Calu3 (cell line): ENCODE measurements at regions of chr12 and their contacts with region 1.

Region 1: DNA sequence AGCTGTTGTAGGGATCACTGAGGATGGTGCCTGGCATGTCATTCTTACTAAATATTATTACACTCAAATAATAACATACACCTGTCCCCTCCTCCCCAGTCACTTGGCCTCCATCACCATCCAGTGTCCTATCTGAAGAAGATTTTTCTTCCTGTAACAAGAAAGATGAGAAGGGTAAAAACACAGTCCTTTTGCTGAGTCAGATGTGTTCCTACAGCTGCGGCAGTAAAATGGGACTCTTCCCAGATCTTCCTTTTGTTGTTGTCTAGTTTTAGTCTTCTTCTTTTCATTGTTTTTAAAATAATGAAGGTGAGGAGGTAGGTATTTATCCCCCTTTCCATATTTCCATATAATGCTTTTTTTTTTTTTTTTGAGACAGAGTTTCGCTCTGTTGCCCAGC is 83.1 kb upstream of the RFLNA start:
- DNase-seq: no peak
- H3K4me3 Mint-ChIP-seq: no peak overlapping the region
- H3K27ac Mint-ChIP-seq: no peak overlapping the region
- H3K4me1 Mint-ChIP-seq: no peaks in the 10 kb centered on the region
- H3K27me3 Mint-ChIP-seq: peaks cover 79% of the 10 kb centered on the region
- CTCF ChIP-seq: no peak

Region 2: DNA sequence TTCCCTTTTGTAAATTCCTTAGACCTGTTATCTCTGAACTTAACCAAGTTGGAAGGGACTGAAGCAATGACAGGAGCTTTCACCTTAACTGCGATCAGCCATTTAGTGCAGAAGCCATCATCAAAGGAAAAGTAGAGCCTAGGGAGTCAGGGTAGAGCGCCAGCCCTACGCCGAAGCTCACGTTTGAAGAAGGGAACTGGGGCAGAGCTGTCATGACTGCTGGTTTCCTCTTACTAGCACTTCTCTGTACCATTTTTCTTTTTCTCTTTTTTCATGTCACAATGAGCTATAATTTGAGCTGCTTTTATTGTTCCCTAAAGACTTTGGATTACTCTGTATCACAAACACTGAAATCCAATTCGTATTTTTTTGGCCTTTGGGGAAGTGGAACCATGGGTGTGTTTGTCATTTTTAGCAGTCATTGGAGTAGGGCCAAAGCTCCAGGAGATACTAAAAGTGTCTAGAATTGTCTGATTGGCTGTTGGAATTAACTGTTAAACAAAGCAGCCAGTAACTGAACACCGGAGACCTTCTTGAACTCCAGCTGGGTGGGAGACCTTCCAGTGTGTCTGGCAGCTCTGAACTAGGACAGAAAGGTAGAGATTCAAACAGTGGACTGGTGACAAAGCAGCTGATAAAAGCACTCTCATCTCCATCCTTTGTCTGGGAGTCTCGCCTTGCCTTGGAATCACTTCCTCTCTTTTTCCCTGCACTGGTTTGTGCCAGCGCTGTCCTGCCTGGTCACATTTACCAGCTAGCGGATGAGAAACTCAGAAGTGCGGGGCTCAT is 969.4 kb before region 1 on chr12:
- CTCF ChIA-PET with region 1: no interaction called
- intact Hi-C with region 1: no loop called
- DNase-seq: no peak
- H3K4me3 Mint-ChIP-seq: no peak overlapping the region
- H3K27ac Mint-ChIP-seq: no peak overlapping the region
- H3K4me1 Mint-ChIP-seq: no peaks in the 10 kb centered on the region
- H3K27me3 Mint-ChIP-seq: no peaks in the 10 kb centered on the region
- CTCF ChIP-seq: no peak

Region 3: GRCh38 chr12:123877968-123878367 is 333.8 kb before region 1 on chr12:
- CTCF ChIA-PET with region 1: interaction called, 10 read pairs
- intact Hi-C with region 1: no loop called
- DNase-seq: no peak
- H3K4me3 Mint-ChIP-seq: no peak overlapping the region
- H3K27ac Mint-ChIP-seq: no peak overlapping the region
- H3K4me1 Mint-ChIP-seq: no peaks in the 10 kb centered on the region
- H3K27me3 Mint-ChIP-seq: peaks cover 69% of the 10 kb centered on the region
- CTCF ChIP-seq: no peak